ENCODE measurements at regions of chr12 and their contacts with region 1.

Region 1: GRCh38 chr12:54968181-54968730 is 16.3 kb downstream of the TESPA1 start:
- DNase-seq: peak in 9 of 35 experiments; percentile 2 to 57 (median 25)
- ATAC-seq: peak; percentile 56 to 79 (median 59)
- H3K4me3 ChIP-seq: no peak overlapping the region
- H3K4me3 Mint-ChIP-seq: peak overlapping the region; percentile 53 to 70 (median 69)
- H3K27ac ChIP-seq: peak overlapping the region; percentile 65
- H3K27ac Mint-ChIP-seq: peak overlapping the region; percentile 86 to 94
- H3K4me1 ChIP-seq: peaks cover 9 to 60% of the 10 kb centered on the region in 2 experiments
- H3K4me1 Mint-ChIP-seq: peaks cover 78 to 85% (median 84%) of the 10 kb centered on the region in 3 donors
- H3K27me3 ChIP-seq: no peaks in the 10 kb centered on the region
- H3K27me3 Mint-ChIP-seq: no peaks in the 10 kb centered on the region

Region 2: DNA sequence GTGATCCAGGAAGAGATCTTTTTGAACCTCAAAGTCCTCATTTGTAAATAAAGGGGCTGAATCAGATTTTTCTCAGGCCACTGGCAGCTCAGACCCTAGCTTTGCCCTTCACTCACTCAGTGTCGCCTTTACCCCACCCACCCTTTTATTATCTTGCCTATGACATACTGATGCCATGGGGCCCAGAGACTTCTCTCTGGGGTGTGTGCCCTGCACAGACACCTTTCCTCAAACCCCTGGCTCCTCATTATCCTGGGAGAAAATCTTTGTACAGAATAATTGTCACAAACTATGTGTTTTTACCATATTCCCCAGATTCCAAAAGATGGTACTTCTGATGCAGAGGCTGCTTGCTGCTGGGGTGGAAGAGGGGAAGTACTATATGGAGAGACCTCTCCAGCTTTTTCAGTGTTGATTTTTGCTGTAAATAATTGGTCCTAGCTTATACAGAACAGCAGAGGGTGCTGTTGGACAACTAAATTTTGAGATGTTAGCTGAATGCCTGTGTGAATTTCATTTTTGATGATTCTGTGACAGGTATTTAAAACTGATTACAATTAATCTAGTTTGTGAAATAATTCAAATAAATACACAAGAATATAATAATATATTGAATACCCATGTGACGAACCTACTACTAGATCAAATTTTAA is 266.2 kb before region 1 on chr12:
- CTCF ChIA-PET with region 1: no interaction called
- POLR2A ChIA-PET with region 1: no interaction called
- DNase-seq: peak in 11 of 35 experiments; percentile 4 to 81 (median 11)
- ATAC-seq: peak; percentile 48 to 55 (median 51)
- H3K4me3 ChIP-seq: no peak overlapping the region
- H3K4me3 Mint-ChIP-seq: no peak overlapping the region
- H3K27ac ChIP-seq: no peak overlapping the region
- H3K27ac Mint-ChIP-seq: no peak overlapping the region
- H3K4me1 ChIP-seq: no peaks in the 10 kb centered on the region
- H3K4me1 Mint-ChIP-seq: no peaks in the 10 kb centered on the region
- H3K27me3 ChIP-seq: peaks cover 0 to 3% of the 10 kb centered on the region in 2 experiments
- H3K27me3 Mint-ChIP-seq: peaks cover 8 to 12% of the 10 kb centered on the region in 2 donors

Region 3: GRCh38 chr12:54941659-54942058 is 26.6 kb before region 1 on chr12:
- CTCF ChIA-PET with region 1: no interaction called
- POLR2A ChIA-PET with region 1: no interaction called
- DNase-seq: no peak
- ATAC-seq: no peak
- H3K4me3 ChIP-seq: no peak overlapping the region
- H3K4me3 Mint-ChIP-seq: no peak overlapping the region
- H3K27ac ChIP-seq: no peak overlapping the region
- H3K27ac Mint-ChIP-seq: no peak overlapping the region
- H3K4me1 ChIP-seq: no peaks in the 10 kb centered on the region
- H3K4me1 Mint-ChIP-seq: peaks cover 3 to 7% (median 4%) of the 10 kb centered on the region in 3 donors
- H3K27me3 ChIP-seq: no peaks in the 10 kb centered on the region
- H3K27me3 Mint-ChIP-seq: no peaks in the 10 kb centered on the region

Region 4: DNA sequence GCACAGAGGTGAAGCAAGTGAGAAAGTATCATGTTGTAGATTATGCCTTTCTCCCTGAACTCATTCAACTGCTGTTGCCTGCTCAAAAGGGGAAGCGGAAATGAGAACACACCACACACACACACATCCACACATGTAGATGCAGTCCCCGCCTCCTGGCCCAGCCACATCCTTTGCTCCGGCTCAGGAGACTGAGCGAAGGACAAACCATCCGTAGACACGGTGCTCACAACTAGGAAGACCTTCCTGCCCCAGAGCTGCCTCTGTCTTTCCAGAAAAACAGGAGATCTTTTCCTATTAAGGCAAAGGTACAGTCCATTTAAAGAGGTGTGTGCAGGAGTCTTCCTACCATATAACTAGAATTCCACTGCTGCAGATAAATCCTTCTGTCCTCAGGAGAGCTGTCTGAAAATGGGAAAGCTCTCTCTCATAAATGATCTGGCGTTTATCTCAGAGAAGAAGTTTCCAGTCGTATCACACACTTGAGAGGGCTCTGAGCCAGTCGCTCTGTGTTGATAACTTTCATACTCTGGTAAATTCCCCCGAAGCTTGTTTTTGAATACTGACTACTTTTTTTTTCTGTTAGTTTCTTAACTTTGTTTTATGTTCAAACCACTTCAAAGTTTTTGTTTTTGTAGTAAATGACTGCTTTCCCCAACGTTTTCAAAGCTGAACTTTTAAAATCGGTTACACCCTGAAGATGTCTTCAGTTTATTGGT is 16.6 kb after region 1 on chr12 and contains the start of gene TESPA1:
- CTCF ChIA-PET with region 1: interaction called in 1 of 2 experiments, 10 read pairs
- POLR2A ChIA-PET with region 1: interaction called in 1 of 2 experiments, 3 read pairs
- DNase-seq: peak; percentile 67 to 93 (median 88)
- ATAC-seq: peak; percentile 86 to 90 (median 88)
- H3K4me3 ChIP-seq: peak within 1 kb of the TSS; percentile 69 to 80
- H3K4me3 Mint-ChIP-seq: peak within 1 kb of the TSS; percentile 90 to 92 (median 91)
- H3K27ac ChIP-seq: peak within 1 kb of the TSS; percentile 94
- H3K27ac Mint-ChIP-seq: peak within 1 kb of the TSS; percentile 92 to 98
- H3K4me1 ChIP-seq: peaks cover 36 to 60% of the 10 kb centered on the region in 2 experiments
- H3K4me1 Mint-ChIP-seq: peaks cover 75 to 92% (median 87%) of the 10 kb centered on the region in 3 donors
- H3K27me3 ChIP-seq: no peaks in the 10 kb centered on the region
- H3K27me3 Mint-ChIP-seq: no peaks in the 10 kb centered on the region
- total RNA-seq, gene TESPA1: 141 to 215 (median 170) TPM

Measured in T-cell (primary cell).